Calu3 (cell line): ENCODE measurements at regions of chr6 and their contacts with region 1.

Region 1: GRCh38 chr6:18323935-18324705 is 59.8 kb upstream of the DEK start:
- DNase-seq: peak; percentile 13
- H3K4me3 Mint-ChIP-seq: no peak overlapping the region
- H3K27ac Mint-ChIP-seq: no peak overlapping the region
- H3K4me1 Mint-ChIP-seq: no peaks in the 10 kb centered on the region
- H3K27me3 Mint-ChIP-seq: no peaks in the 10 kb centered on the region
- CTCF ChIP-seq: peak; percentile 39

Region 2: DNA sequence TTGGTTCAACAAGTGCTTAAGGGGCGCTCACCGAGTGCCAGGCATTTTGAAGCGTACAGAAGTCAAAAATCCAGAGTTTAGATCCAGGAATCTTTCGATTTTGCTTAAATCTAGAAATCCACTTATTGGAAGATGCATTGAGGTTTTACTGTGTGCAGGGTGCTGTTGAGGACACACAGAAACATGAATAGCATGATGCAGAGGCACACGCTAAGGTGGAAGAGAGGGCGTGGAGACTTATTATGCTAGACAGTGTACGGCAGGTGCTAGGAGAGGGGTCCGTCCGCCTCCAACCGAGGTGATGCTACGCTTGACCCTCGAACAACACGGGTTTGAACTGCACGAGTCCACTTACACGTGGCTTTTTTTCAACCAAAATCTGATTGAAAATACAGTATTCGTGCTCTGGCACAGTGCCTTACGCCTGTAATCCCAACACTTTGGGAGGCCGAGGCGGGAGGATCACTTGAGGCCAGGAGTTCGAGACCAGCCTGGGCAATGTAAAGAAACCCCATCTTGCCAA is 335.6 kb before region 1 on chr6:
- CTCF ChIA-PET with region 1: no interaction called
- intact Hi-C with region 1: no loop called
- DNase-seq: no peak
- H3K4me3 Mint-ChIP-seq: peak overlapping the region; percentile 80
- H3K27ac Mint-ChIP-seq: peak overlapping the region; percentile 47
- H3K4me1 Mint-ChIP-seq: peaks cover 15% of the 10 kb centered on the region
- H3K27me3 Mint-ChIP-seq: no peaks in the 10 kb centered on the region
- CTCF ChIP-seq: no peak

Region 3: DNA sequence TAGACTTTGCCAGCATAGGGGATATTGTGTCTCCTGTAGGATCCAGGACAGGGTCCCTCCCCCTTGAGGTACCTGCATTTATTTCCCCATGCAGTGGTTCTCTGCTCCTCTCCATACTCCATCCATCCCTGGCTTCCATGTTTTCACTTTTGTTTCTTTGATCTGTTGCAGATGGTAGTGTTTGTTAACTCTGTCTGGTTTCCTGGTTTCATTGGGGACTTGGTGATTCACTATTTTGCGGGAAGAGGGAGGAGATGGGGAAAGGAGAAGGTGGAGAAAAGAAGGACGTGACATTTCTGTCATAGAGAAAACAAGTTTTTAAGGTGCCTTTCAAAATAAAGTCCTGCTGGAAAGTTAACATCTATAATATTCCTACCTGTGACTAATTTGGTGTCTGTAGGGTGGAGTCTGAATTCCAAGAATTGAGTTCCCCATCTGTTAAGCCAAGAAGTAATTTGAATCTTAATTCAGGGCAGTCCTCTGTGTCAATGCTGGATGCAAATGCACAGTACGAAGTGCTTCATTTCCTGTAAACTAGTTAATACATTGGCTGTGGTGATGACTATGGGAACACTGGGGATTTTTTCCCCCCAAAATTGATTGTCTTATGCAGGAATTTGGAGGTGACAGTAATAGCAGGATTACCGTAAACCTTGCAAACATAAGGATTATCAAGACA is 56.2 kb after region 1 on chr6:
- CTCF ChIA-PET with region 1: no interaction called
- intact Hi-C with region 1: loop called (anchors 2 kb)
- DNase-seq: no peak
- H3K4me3 Mint-ChIP-seq: no peak overlapping the region
- H3K27ac Mint-ChIP-seq: no peak overlapping the region
- H3K4me1 Mint-ChIP-seq: peaks cover 8% of the 10 kb centered on the region
- H3K27me3 Mint-ChIP-seq: no peaks in the 10 kb centered on the region
- CTCF ChIP-seq: no peak

Region 4: DNA sequence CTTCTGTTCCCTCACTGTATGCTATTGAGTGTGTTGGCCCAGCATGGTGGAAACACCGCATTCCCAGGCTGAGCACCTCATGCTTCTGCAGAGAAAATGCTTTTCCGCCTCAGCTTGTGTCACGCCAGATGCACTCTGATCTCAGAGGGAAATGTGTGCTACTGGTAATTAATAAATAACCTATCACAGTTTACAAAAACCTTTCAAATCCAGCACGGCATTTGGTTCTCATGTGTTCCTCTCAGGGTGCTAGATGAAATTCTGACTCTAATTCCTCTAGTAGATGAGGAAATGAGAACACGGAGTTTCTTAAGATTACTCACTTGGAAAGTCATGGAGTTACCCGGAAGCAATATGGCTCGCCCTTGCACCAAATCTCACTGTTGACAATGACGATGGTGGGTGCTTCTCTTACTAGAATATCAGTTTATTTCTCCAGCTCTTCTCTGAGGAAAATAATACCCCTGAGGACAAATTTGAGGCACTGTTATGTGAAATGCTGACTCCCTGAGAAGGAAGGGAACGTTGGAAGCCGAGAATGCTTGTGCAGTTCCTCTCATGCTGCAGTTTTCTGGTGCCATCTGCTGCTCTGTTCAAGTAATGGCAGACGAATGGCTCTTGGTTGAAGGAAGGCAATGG is 179.6 kb after region 1 on chr6:
- CTCF ChIA-PET with region 1: interaction called, 10 read pairs
- intact Hi-C with region 1: loop called (anchors 1 kb)
- DNase-seq: peak; percentile 52
- H3K4me3 Mint-ChIP-seq: peak overlapping the region; percentile 30
- H3K27ac Mint-ChIP-seq: peak overlapping the region; percentile 20
- H3K4me1 Mint-ChIP-seq: peaks cover 49% of the 10 kb centered on the region
- H3K27me3 Mint-ChIP-seq: no peaks in the 10 kb centered on the region
- CTCF ChIP-seq: peak; percentile 62